ENCODE measurements at regions of chr4 and their contacts with region 1.

Region 1: GRCh38 chr4:15649914-15650545 is 5.1 kb downstream of the FBXL5 start:
- DNase-seq: peak; percentile 50 to 87 (median 60)
- ATAC-seq: peak; percentile 74
- H3K4me3 ChIP-seq: no peak overlapping the region
- H3K27ac ChIP-seq: peak overlapping the region; percentile 61
- H3K4me1 ChIP-seq: peaks cover 13 to 15% of the 10 kb centered on the region in 2 experiments; a peak in 4 of 5 replicates
- H3K27me3 ChIP-seq: no peaks in the 10 kb centered on the region
- CTCF ChIP-seq: peak; percentile 72 to 92 (median 82)
- EP300 ChIP-seq: peak; percentile 68
- POLR2A ChIP-seq: no peak
- RAD21 ChIP-seq: peak; percentile 85 to 87

Region 2: GRCh38 chr4:15525054-15525453 is 125.0 kb before region 1 on chr4:
- CTCF ChIA-PET with region 1: no interaction called
- POLR2A ChIA-PET with region 1: no interaction called
- in situ Hi-C with region 1: no loop called
- intact Hi-C with region 1: loop called (anchors 5 kb)
- DNase-seq: no peak
- ATAC-seq: no peak
- H3K4me3 ChIP-seq: no peak overlapping the region
- H3K27ac ChIP-seq: no peak overlapping the region
- H3K4me1 ChIP-seq: peaks cover 0 to 25% of the 10 kb centered on the region in 2 experiments; a peak in 3 of 5 replicates
- H3K27me3 ChIP-seq: no peaks in the 10 kb centered on the region
- CTCF ChIP-seq: no peak
- EP300 ChIP-seq: no peak
- POLR2A ChIP-seq: no peak
- RAD21 ChIP-seq: no peak

Region 3: DNA sequence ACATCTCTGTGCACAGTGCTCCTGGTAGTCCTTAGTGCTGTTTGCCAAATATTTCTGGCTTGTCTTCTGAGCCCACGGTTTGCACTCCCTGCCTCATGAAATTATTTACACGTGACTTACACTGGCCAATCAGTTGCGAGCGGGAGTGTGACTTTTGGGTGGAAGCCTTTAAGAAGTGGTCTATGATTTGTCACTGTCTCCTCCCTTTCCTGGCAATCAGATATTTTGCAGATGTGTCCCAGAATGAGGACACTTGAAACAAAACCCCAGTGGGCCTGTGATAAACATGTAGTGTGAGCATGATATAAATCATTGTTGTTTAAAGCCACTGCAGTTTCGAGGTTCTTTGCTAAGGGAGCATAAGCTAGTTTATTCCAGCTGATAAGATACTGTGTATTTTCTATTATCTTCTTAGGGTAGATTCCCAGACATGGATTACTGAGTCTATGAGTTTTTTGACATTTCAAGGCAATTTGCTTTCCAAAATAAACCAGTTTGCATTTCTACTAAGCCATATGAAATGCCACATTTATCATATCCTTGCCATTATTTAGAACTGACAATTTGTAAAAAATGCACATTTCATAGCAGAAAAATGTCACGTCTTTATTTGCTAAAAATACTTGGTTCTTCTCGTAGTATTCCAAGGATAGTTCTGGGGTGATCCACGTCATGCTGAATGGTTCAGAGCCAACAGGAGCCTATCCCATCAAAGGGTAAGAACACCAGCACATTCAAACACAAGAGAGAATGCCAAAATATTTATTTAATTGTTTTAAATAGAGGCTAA is 64.8 kb after region 1 on chr4:
- CTCF ChIA-PET with region 1: no interaction called
- POLR2A ChIA-PET with region 1: no interaction called
- in situ Hi-C with region 1: no loop called
- intact Hi-C with region 1: loop called (anchors 5 kb)
- DNase-seq: peak; percentile 24 to 45 (median 37)
- ATAC-seq: peak; percentile 68
- H3K4me3 ChIP-seq: no peak overlapping the region
- H3K27ac ChIP-seq: no peak overlapping the region
- H3K4me1 ChIP-seq: no peaks in the 10 kb centered on the region; a peak in 1 of 5 replicates
- H3K27me3 ChIP-seq: no peaks in the 10 kb centered on the region; a peak in 1 of 5 replicates
- CTCF ChIP-seq: no peak
- EP300 ChIP-seq: no peak
- POLR2A ChIP-seq: no peak
- RAD21 ChIP-seq: no peak

Region 4: DNA sequence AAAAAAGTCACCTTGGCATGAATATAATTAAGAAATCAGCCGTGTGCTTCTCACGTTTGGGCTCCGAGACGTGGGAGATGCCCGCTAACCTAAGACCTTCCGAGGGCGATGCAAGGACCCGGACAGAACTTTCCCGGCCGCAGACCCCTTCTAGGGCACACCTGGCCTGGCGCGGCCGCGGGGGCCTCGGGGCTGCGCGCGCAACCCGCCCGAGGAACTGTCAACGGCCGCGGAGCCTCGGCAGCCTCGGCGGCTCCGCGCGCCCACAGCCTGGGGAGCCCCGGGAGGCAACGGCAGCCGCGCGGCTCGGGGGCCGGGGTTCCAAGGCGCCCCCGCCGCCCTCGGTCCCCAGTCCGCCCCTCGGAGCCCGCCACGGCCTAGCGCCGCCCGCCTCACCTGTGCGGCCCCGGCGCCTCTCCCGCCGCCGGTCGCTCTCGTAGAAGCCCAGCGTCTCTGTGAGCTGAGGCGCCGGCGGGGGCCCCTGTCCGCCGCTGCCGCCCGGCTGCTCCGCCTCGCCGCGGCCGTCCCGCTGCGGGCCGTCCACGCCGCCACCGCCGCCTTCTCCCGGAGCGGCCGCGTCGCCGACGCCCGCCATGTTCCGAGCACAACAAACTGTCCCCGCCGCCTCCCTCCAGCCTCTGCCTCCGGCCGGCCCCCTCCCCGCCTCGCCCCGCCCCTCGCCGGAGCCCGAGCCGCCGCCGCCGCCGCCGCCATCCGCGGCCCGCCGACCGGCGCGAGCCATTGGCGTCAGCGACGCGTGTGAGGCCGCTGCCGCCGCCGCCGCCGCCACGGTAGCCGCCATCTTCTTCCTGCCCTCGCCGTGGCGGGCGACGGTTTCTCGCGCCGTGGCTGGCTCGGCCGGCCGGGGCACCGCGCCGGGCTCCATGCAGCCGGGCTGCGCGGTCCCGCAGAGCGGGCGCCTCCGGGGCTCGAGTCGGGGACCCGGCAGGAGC is 576.1 kb after region 1 on chr4 and contains the start of gene TAPT1:
- CTCF ChIA-PET with region 1: no interaction called
- POLR2A ChIA-PET with region 1: no interaction called
- in situ Hi-C with region 1: no loop called
- intact Hi-C with region 1: loop called (anchors 5 kb)
- DNase-seq: peak; percentile 80 to 84 (median 82)
- ATAC-seq: peak; percentile 57
- H3K4me3 ChIP-seq: peak within 1 kb of the TSS; percentile 81
- H3K27ac ChIP-seq: peak within 1 kb of the TSS; percentile 91
- H3K4me1 ChIP-seq: peaks cover 6 to 12% of the 10 kb centered on the region in 2 experiments; a peak in 4 of 5 replicates
- H3K27me3 ChIP-seq: no peaks in the 10 kb centered on the region
- CTCF ChIP-seq: no peak
- EP300 ChIP-seq: no peak
- POLR2A ChIP-seq: no peak
- RAD21 ChIP-seq: no peak
- polyA plus RNA-seq, gene TAPT1: 1.6 to 2.7 TPM